ENCODE measurements at regions of chr14 and their contacts with region 1.

Region 1: GRCh38 chr14:102966681-102967505 is 44.4 kb downstream of the AMN start:
- DNase-seq: no peak
- H3K4me3 ChIP-seq: no peak overlapping the region
- H3K27ac ChIP-seq: no peak overlapping the region
- H3K4me1 ChIP-seq: no peaks in the 10 kb centered on the region
- H3K27me3 ChIP-seq: no peaks in the 10 kb centered on the region
- CTCF ChIP-seq: no peak
- POLR2A ChIP-seq: no peak

Region 2: DNA sequence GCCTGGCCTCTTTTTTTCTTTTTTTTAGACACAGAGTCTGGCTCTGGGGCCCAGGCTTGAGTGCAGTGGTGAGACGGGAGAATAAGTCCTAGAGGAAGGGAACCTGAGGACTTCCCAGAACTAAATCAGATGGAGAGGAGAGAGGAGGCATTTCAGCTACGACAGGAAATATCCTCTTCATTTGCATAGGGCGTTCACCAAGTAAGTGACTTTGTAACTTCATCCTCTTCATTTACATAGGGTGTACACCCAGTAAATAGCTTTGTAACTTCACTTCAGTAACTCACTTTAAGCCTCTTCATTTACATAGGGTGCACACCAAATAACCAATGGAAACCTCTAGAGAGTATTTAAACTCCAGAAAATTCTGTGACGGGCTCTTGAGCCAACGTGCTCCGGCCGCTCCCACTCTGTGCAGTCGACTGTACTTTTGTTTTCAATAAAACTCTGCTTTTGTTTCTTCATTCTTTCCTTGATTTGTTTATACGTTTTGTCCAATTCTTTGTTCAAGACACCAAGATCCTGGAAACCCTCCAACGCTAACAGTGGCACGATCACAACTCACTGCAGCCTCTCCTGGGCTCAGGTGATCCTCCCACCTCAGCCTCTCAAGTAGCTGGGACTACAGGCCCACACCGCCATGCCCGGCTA is 435.9 kb before region 1 on chr14:
- intact Hi-C with region 1: loop called (anchors 5 kb)
- DNase-seq: no peak
- H3K4me3 ChIP-seq: no peak overlapping the region
- H3K27ac ChIP-seq: no peak overlapping the region
- H3K4me1 ChIP-seq: no peaks in the 10 kb centered on the region
- H3K27me3 ChIP-seq: no peaks in the 10 kb centered on the region
- CTCF ChIP-seq: no peak
- POLR2A ChIP-seq: no peak

Region 3: DNA sequence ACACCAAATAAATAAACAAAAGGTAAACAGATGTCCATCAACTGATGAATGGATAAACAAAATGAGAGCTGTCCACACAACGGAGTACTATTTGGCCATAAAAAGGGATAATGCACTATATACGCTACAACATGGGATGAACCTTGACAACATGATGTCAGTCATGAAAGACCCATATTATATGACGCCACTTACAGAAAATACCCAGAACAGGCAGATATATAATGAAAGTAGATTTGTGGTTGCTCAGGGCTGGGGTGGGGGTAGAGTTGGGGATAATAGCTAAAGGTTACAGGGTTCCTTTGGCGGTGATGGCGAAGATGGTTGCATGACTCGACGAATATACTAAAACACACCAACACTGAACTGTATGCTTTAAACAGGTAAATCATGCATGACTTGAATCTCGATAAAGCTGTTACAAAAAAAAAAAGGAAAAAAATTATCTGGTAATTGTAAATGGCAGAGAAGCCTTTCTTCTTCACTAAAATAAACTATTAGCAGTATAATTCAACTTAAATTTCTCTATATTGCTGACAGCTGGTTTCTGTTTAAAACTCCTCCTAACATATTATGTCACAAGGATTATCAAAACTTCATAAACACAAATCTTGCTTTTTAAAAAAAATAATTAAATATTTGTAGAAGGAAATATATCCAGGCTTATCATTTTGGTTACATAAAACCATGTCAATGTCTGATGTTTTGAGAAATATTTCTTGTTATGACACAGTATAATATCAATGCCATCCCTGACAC is 76.5 kb after region 1 on chr14:
- intact Hi-C with region 1: loop called (anchors 2 kb)
- DNase-seq: peak in 1 of 2 donors; percentile 33
- H3K4me3 ChIP-seq: no peak overlapping the region
- H3K27ac ChIP-seq: no peak overlapping the region
- H3K4me1 ChIP-seq: peaks cover 3 to 4% of the 10 kb centered on the region in 2 donors
- H3K27me3 ChIP-seq: no peaks in the 10 kb centered on the region
- CTCF ChIP-seq: no peak
- POLR2A ChIP-seq: no peak

Region 4: GRCh38 chr14:103740991-103741689 is 774.2 kb after region 1 on chr14:
- intact Hi-C with region 1: no loop called
- DNase-seq: no peak
- H3K4me3 ChIP-seq: no peak overlapping the region
- H3K27ac ChIP-seq: no peak overlapping the region
- H3K4me1 ChIP-seq: peaks cover 6 to 16% of the 10 kb centered on the region in 2 donors
- H3K27me3 ChIP-seq: no peaks in the 10 kb centered on the region
- CTCF ChIP-seq: no peak
- POLR2A ChIP-seq: no peak

Measured in breast epithelium (tissue), 4 donors.